ENCODE measurements at regions of chr6 and their contacts with region 1.

Region 1: GRCh38 chr6:35452186-35453090 is at the start of gene FANCE:
- DNase-seq: peak; percentile 98
- H3K4me3 ChIP-seq: peak within 1 kb of the TSS; percentile 41 to 83 (median 69)
- H3K27ac ChIP-seq: no peak within 1 kb of the TSS
- H3K4me1 ChIP-seq: peaks cover 16% of the 10 kb centered on the region
- H3K27me3 ChIP-seq: peaks cover 0 to 2% of the 10 kb centered on the region in 2 experiments
- CTCF ChIP-seq: no peak
- POLR2A ChIP-seq: no peak
- total RNA-seq, gene FANCE: 11.0 and 12.7 TPM in 2 replicates

Region 2: GRCh38 chr6:35318196-35319171 is 134.0 kb before region 1 on chr6:
- CTCF ChIA-PET with region 1: interaction called, 14 read pairs
- POLR2A ChIA-PET with region 1: no interaction called
- dilution Hi-C with region 1: no loop called
- intact Hi-C with region 1: no loop called
- DNase-seq: peak; percentile 85
- H3K4me3 ChIP-seq: peak overlapping the region; percentile 23 to 52 (median 31)
- H3K27ac ChIP-seq: no peak overlapping the region
- H3K4me1 ChIP-seq: peaks cover 5% of the 10 kb centered on the region
- H3K27me3 ChIP-seq: peaks cover 9 to 15% of the 10 kb centered on the region in 2 experiments
- CTCF ChIP-seq: peak in 1 of 2 donors; percentile 13
- POLR2A ChIP-seq: no peak

Region 3: GRCh38 chr6:35342258-35343091 is 110.0 kb before region 1 on chr6 and contains the start of gene PPARD:
- CTCF ChIA-PET with region 1: interaction called, 270 read pairs
- POLR2A ChIA-PET with region 1: interaction called, 6 read pairs
- dilution Hi-C with region 1: no loop called
- intact Hi-C with region 1: loop called (anchors 1 kb)
- DNase-seq: peak; percentile 97
- H3K4me3 ChIP-seq: peak within 1 kb of the TSS; percentile 47 to 75 (median 70)
- H3K27ac ChIP-seq: peak within 1 kb of the TSS; percentile 58
- H3K4me1 ChIP-seq: peaks cover 14% of the 10 kb centered on the region
- H3K27me3 ChIP-seq: peaks cover 0 to 4% of the 10 kb centered on the region in 2 experiments
- CTCF ChIP-seq: peak; percentile 95 to 97
- POLR2A ChIP-seq: peak; percentile 74
- total RNA-seq, gene PPARD: 23.4 and 29.2 TPM in 2 replicates

Region 4: GRCh38 chr6:35415065-35415991 is 37.1 kb before region 1 on chr6:
- CTCF ChIA-PET with region 1: interaction called, 228 read pairs
- POLR2A ChIA-PET with region 1: no interaction called
- dilution Hi-C with region 1: no loop called
- intact Hi-C with region 1: loop called (anchors 1 kb)
- DNase-seq: peak; percentile 44
- H3K4me3 ChIP-seq: no peak overlapping the region
- H3K27ac ChIP-seq: no peak overlapping the region
- H3K4me1 ChIP-seq: peaks cover 13% of the 10 kb centered on the region
- H3K27me3 ChIP-seq: no peaks in the 10 kb centered on the region
- CTCF ChIP-seq: peak; percentile 5 to 36
- POLR2A ChIP-seq: no peak

Region 5: GRCh38 chr6:35435074-35435837 is 17.2 kb before region 1 on chr6:
- CTCF ChIA-PET with region 1: interaction called, 29 read pairs
- POLR2A ChIA-PET with region 1: no interaction called
- dilution Hi-C with region 1: no loop called
- intact Hi-C with region 1: no loop called
- DNase-seq: no peak
- H3K4me3 ChIP-seq: no peak overlapping the region
- H3K27ac ChIP-seq: no peak overlapping the region
- H3K4me1 ChIP-seq: no peaks in the 10 kb centered on the region
- H3K27me3 ChIP-seq: no peaks in the 10 kb centered on the region
- CTCF ChIP-seq: no peak
- POLR2A ChIP-seq: no peak

Region 6: GRCh38 chr6:35474131-35474940 is 21.9 kb after region 1 on chr6:
- CTCF ChIA-PET with region 1: no interaction called
- POLR2A ChIA-PET with region 1: no interaction called
- dilution Hi-C with region 1: no loop called
- intact Hi-C with region 1: no loop called
- DNase-seq: no peak
- H3K4me3 ChIP-seq: no peak overlapping the region
- H3K27ac ChIP-seq: no peak overlapping the region
- H3K4me1 ChIP-seq: peaks cover 21% of the 10 kb centered on the region
- H3K27me3 ChIP-seq: no peaks in the 10 kb centered on the region
- CTCF ChIP-seq: no peak
- POLR2A ChIP-seq: peak; percentile 64